ENCODE measurements at regions of chr17 and their contacts with region 1.

Region 1: DNA sequence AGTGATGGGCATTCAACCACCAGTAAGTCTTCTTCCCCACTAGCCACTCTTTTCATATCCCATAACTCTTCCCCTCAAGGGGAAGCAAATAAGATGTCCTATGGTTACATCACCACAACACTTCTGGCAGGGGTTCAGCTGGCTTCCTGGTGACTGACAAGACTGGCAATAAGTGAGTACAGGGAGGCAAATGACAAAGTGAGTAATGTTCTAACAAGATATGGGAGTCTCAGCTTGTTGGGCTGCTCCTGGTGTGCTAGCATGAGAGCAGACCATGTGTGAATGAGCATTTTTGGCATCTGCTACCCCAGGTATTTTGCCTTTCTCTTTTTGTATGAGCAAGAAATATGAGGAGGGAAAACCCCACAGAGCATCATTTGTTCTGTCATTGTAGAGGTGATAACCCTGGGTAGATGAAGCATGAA is 9.9 kb downstream of the TMIGD1 start:
- DNase-seq: peak; percentile 59
- ATAC-seq: peak; percentile 92
- H3K4me3 Mint-ChIP-seq: no peak overlapping the region
- H3K27ac Mint-ChIP-seq: peak overlapping the region; percentile 56
- H3K4me1 Mint-ChIP-seq: peaks cover 24% of the 10 kb centered on the region
- H3K27me3 Mint-ChIP-seq: no peaks in the 10 kb centered on the region
- CTCF ChIP-seq: no peak

Region 2: GRCh38 chr17:30187573-30187972 is 136.3 kb before region 1 on chr17:
- CTCF ChIA-PET with region 1: no interaction called
- POLR2A ChIA-PET with region 1: no interaction called
- intact Hi-C with region 1: no loop called
- DNase-seq: no peak
- ATAC-seq: no peak
- H3K4me3 Mint-ChIP-seq: no peak overlapping the region
- H3K27ac Mint-ChIP-seq: no peak overlapping the region
- H3K4me1 Mint-ChIP-seq: peaks cover 5% of the 10 kb centered on the region
- H3K27me3 Mint-ChIP-seq: no peaks in the 10 kb centered on the region
- CTCF ChIP-seq: no peak

Region 3: GRCh38 chr17:30291543-30292285 is 32.2 kb before region 1 on chr17 and contains the start of gene BLMH:
- CTCF ChIA-PET with region 1: interaction called, 14 read pairs
- POLR2A ChIA-PET with region 1: interaction called, 5 read pairs
- intact Hi-C with region 1: no loop called
- DNase-seq: peak; percentile 86
- ATAC-seq: peak; percentile 92
- H3K4me3 Mint-ChIP-seq: peak within 1 kb of the TSS; percentile 94
- H3K27ac Mint-ChIP-seq: peak within 1 kb of the TSS; percentile 91
- H3K4me1 Mint-ChIP-seq: peaks cover 18% of the 10 kb centered on the region
- H3K27me3 Mint-ChIP-seq: no peaks in the 10 kb centered on the region
- CTCF ChIP-seq: no peak
- total RNA-seq, gene BLMH: 75.9 to 78.6 TPM

Region 4: DNA sequence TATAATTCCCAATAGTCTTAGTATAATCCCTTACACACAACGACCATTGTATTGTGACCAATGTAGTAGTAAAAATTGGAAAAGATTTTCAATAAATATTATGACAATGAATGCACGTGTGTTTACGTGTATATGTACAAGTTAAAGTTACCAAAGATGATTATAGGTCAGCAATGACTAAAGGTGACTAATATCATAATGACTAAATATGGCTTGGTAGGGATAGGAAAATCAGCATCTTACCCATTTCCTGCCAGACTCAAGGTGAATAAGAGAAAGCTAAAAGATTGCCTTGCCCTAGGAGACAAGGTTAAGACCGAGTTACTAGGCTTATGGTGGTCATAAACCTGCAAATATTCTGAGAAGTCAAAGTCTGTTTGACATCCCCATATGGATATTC is 89.2 kb after region 1 on chr17:
- CTCF ChIA-PET with region 1: no interaction called
- POLR2A ChIA-PET with region 1: no interaction called
- intact Hi-C with region 1: no loop called
- DNase-seq: no peak
- ATAC-seq: peak; percentile 95
- H3K4me3 Mint-ChIP-seq: no peak overlapping the region
- H3K27ac Mint-ChIP-seq: peak overlapping the region; percentile 78
- H3K4me1 Mint-ChIP-seq: peaks cover 42% of the 10 kb centered on the region
- H3K27me3 Mint-ChIP-seq: no peaks in the 10 kb centered on the region
- CTCF ChIP-seq: no peak

Region 5: DNA sequence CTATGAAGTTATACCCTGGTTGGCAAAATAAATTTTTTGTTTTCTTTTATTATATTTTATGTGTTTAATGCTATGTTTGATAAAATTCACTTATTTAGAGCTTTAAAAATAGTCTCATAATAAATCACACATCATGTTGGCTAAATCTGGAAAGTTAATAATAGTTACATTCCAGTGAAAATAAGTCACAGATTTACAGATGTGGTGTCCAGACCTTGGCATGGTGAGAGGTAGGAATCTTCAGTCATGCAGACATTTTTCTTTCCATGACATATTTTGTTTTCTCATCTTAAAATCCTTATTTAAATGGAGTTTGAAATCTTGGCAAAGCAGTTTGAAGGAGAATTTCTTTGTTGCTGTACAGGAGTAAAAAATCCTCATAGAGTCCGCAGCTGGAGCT is 105.2 kb after region 1 on chr17:
- CTCF ChIA-PET with region 1: no interaction called
- POLR2A ChIA-PET with region 1: no interaction called
- intact Hi-C with region 1: no loop called
- DNase-seq: no peak
- ATAC-seq: no peak
- H3K4me3 Mint-ChIP-seq: no peak overlapping the region
- H3K27ac Mint-ChIP-seq: no peak overlapping the region
- H3K4me1 Mint-ChIP-seq: no peaks in the 10 kb centered on the region
- H3K27me3 Mint-ChIP-seq: no peaks in the 10 kb centered on the region
- CTCF ChIP-seq: no peak